ENCODE measurements at regions of chrX and their contacts with region 1.

Region 1: GRCh38 chrX:41664307-41665299 is 24.2 kb upstream of the GPR34 start:
- DNase-seq: no peak
- H3K4me3 Mint-ChIP-seq: peak overlapping the region; percentile 7
- H3K27ac Mint-ChIP-seq: peak overlapping the region; percentile 88
- H3K4me1 Mint-ChIP-seq: peaks cover 46% of the 10 kb centered on the region
- H3K27me3 Mint-ChIP-seq: no peaks in the 10 kb centered on the region

Region 2: GRCh38 chrX:41441934-41442823 is 222.4 kb before region 1 on chrX:
- intact Hi-C with region 1: loop called (anchors 10 kb)
- DNase-seq: peak; percentile 87
- H3K4me3 Mint-ChIP-seq: peak overlapping the region; percentile 73
- H3K27ac Mint-ChIP-seq: peak overlapping the region; percentile 85
- H3K4me1 Mint-ChIP-seq: peaks cover 18% of the 10 kb centered on the region
- H3K27me3 Mint-ChIP-seq: no peaks in the 10 kb centered on the region

Region 3: GRCh38 chrX:41561045-41561444 is 103.6 kb before region 1 on chrX:
- intact Hi-C with region 1: loop called (anchors 1 kb)
- DNase-seq: peak; percentile 25
- H3K4me3 Mint-ChIP-seq: peak overlapping the region; percentile 56
- H3K27ac Mint-ChIP-seq: peak overlapping the region; percentile 80
- H3K4me1 Mint-ChIP-seq: peaks cover 57% of the 10 kb centered on the region
- H3K27me3 Mint-ChIP-seq: no peaks in the 10 kb centered on the region

Region 4: DNA sequence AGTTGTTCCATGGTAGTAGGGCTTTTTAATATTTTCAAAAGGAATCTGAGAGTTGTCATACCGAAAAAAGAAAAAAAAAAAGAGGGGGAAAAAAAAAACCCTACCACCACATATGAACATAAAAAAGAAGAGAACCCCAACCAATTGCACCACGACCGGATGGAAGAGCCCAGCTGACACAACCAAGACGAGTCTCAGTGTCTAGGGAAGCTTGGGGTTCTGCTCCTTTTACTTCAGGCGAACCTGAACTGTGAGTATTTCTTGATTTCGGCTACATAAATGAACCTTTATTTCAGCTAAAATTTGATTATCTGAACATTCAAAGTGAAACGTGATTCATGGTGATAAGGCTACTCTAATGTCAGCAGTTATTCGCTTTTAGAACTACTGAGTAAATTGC is 24.2 kb after region 1 on chrX and contains the start of gene GPR34:
- intact Hi-C with region 1: loop called (anchors 2 kb)
- DNase-seq: no peak
- H3K4me3 Mint-ChIP-seq: peak within 1 kb of the TSS; percentile 48
- H3K27ac Mint-ChIP-seq: peak within 1 kb of the TSS; percentile 63
- H3K4me1 Mint-ChIP-seq: peaks cover 39% of the 10 kb centered on the region
- H3K27me3 Mint-ChIP-seq: no peaks in the 10 kb centered on the region
- total RNA-seq, gene GPR34: 0.66 and 1.2 TPM in 2 replicates

Region 5: GRCh38 chrX:41720125-41720779 is 55.6 kb after region 1 on chrX:
- intact Hi-C with region 1: loop called (anchors 1 kb)
- DNase-seq: peak; percentile 23
- H3K4me3 Mint-ChIP-seq: no peak overlapping the region
- H3K27ac Mint-ChIP-seq: peak overlapping the region; percentile 82
- H3K4me1 Mint-ChIP-seq: peaks cover 61% of the 10 kb centered on the region
- H3K27me3 Mint-ChIP-seq: no peaks in the 10 kb centered on the region

Region 6: GRCh38 chrX:41946989-41947612 is 282.5 kb after region 1 on chrX:
- intact Hi-C with region 1: no loop called
- DNase-seq: no peak
- H3K4me3 Mint-ChIP-seq: no peak overlapping the region
- H3K27ac Mint-ChIP-seq: no peak overlapping the region
- H3K4me1 Mint-ChIP-seq: peaks cover 9% of the 10 kb centered on the region
- H3K27me3 Mint-ChIP-seq: peaks cover 4% of the 10 kb centered on the region

Region 7: DNA sequence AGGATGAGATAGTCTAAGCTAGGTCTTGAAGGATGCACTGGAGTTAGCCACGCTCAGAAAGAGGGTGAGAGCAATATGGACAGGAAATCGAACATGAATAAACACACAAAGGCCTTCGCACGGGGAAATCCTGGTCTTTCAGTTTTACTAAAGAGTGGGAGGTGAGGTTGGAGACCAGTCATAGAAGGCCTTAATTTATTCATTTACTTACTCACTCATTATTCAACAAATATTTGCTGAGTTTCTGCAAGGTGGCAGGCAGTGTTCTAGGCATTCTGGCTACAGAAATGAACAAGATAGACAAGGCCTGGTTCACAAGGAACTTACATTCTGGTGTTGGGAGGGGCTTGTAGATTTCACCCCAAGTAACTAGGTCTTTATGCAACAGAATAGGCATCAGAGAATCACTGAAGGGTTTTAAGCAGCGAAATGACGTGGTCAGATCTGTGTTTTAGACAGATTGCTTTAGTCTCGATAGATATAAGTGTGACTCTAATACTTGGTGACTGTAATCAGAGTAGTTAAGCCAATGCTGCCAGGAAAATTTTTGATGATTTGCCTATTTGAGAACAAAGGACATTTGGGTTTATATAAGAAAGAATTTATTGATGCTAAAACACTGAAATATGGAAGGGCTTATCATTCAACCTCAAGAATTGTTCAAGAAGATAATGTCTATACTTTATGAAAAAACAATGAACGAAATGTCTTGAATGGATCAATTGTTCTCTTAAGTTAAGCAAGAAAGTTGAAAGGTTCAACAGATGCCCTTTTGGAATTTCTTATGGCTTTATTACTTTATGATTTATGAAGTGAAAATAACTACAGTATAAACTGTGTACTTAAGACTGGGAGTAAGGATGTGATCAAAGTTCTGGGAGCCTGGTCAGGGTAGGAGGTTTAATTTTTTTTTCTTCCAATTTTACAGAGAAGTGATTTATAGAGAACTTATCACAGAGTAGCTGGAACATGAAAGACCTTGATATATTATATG is 443.2 kb after region 1 on chrX:
- intact Hi-C with region 1: loop called (anchors 10 kb)
- DNase-seq: no peak
- H3K4me3 Mint-ChIP-seq: peak overlapping the region; percentile 31
- H3K27ac Mint-ChIP-seq: peak overlapping the region; percentile 52
- H3K4me1 Mint-ChIP-seq: peaks cover 29% of the 10 kb centered on the region
- H3K27me3 Mint-ChIP-seq: no peaks in the 10 kb centered on the region